Right cardiac atrium (tissue), 5 donors: ENCODE measurements at regions of chr7 and their contacts with region 1.

Region 1: GRCh38 chr7:94087664-94088352 is 83.7 kb upstream of the BET1 start:
- DNase-seq: no peak
- ATAC-seq: peak; percentile 65 to 76
- H3K4me3 ChIP-seq: peak overlapping the region; percentile 48
- H3K27ac ChIP-seq: no peak overlapping the region
- H3K4me1 ChIP-seq: no peaks in the 10 kb centered on the region
- H3K27me3 ChIP-seq: no peaks in the 10 kb centered on the region

Region 2: GRCh38 chr7:93890464-93891068 is 197.2 kb before region 1 on chr7 and contains the start of gene TFPI2:
- intact Hi-C with region 1: loop called in 1 of 4 experiments (anchors 10 kb)
- DNase-seq: peak; percentile 25 to 69 (median 64)
- ATAC-seq: peak; percentile 65 to 75
- H3K4me3 ChIP-seq: peak within 1 kb of the TSS; percentile 75
- H3K27ac ChIP-seq: peak within 1 kb of the TSS; percentile 53
- H3K4me1 ChIP-seq: no peaks in the 10 kb centered on the region
- H3K27me3 ChIP-seq: no peaks in the 10 kb centered on the region
- total RNA-seq, gene TFPI2: 1.6 to 5.1 (median 2.9) TPM

Region 3: DNA sequence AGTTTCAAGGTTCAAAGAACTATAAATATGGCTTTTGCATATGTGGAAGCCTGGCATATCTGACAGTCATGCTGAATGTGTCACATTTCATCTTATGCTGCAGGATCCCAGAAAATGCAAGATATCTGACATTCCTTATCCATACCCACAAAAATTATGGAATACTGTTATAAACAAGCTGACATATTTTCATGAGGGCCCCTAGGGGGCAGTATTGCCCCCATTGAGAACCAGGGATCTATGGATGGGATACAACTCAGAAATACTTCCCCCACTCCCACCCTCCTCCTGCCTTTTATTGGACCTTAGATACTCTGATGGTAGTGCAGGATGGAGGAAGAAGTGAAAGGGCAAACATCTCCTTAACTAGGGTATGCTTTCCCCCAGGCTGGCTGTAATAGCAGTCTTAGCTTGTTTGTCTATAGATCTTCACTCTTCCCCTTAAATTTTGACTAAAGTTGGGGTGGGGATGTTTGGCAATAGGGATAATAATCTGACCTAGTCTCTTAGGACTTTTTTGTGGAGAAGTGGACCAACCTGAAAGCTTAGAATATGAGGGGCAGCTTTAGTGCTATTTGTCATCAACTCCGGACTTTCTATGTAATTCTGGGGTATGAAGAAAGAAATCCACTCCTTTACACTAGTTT is 184.9 kb before region 1 on chr7:
- intact Hi-C with region 1: loop called in 3 of 4 experiments (anchors 5 to 10 kb)
- DNase-seq: peak in 1 of 3 donors; percentile 15
- ATAC-seq: peak; percentile 63 to 64
- H3K4me3 ChIP-seq: no peak overlapping the region
- H3K27ac ChIP-seq: no peak overlapping the region
- H3K4me1 ChIP-seq: no peaks in the 10 kb centered on the region
- H3K27me3 ChIP-seq: no peaks in the 10 kb centered on the region